ENCODE measurements at regions of chr6 and their contacts with region 1.

Region 1: DNA sequence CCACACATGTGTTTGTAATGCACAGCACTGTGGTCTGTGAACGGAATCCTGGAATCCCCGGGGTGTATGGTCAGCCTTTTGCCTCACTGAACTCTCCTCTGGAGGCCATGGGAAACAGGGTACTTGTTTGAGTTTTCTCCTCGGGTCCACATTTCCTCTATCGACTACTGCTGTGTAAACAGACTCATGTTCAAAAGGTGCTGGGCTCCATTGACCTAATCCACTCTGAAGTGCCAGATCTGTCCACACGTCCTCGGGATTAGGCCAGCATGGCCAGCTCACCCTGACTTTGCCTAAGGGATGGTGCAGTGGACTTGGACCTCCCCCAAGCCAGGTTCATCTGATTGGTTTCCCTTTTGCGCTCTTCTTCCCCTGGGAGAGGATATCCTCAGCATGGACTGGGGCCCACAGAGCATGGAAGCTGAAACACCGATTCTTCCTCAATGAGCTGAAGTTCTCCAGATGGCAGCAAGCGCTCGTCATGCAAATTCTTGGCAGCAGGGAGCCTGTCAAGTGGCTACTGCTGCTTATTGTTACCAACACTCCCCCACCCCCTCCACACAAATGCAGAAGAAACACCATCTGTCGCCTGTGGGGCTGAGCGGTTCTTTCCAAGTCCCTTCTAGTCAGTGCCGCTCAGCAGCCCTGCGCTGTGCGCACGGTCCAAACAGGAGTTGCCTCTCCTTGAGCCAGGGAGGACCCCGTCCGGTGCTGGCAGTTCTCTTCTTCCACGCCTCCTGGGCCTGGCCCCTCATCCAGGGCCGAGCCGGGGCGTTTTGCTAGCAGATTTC is 292.6 kb upstream of the MARCKS start:
- DNase-seq: peak; percentile 30
- ATAC-seq: peak; percentile 91
- H3K4me3 Mint-ChIP-seq: peak overlapping the region; percentile 64
- H3K27ac Mint-ChIP-seq: no peak overlapping the region
- H3K4me1 Mint-ChIP-seq: peaks cover 20% of the 10 kb centered on the region
- H3K27me3 Mint-ChIP-seq: no peaks in the 10 kb centered on the region
- CTCF ChIP-seq: no peak

Region 2: DNA sequence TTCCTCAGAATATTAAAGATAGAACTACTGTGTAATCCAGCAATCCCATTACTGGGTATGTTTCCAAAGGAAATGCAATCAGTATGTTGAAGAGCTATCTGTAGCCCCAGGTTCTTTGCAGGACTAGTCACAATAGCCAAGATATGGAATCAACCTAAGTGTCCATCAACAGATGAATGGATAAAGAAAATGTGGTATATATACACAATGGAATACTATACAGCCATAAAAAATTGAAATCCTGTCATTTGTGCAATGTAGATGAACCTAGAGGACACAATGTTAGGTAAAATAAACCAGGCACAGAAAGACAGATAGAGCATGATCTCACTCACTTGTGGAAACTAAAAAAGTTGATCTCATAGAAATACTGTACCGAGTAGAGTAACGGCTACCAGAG is 13.4 kb before region 1 on chr6:
- CTCF ChIA-PET with region 1: no interaction called
- POLR2A ChIA-PET with region 1: no interaction called
- intact Hi-C with region 1: no loop called
- DNase-seq: no peak
- ATAC-seq: no peak
- H3K4me3 Mint-ChIP-seq: no peak overlapping the region
- H3K27ac Mint-ChIP-seq: no peak overlapping the region
- H3K4me1 Mint-ChIP-seq: peaks cover 2% of the 10 kb centered on the region
- H3K27me3 Mint-ChIP-seq: no peaks in the 10 kb centered on the region
- CTCF ChIP-seq: no peak

Region 3: DNA sequence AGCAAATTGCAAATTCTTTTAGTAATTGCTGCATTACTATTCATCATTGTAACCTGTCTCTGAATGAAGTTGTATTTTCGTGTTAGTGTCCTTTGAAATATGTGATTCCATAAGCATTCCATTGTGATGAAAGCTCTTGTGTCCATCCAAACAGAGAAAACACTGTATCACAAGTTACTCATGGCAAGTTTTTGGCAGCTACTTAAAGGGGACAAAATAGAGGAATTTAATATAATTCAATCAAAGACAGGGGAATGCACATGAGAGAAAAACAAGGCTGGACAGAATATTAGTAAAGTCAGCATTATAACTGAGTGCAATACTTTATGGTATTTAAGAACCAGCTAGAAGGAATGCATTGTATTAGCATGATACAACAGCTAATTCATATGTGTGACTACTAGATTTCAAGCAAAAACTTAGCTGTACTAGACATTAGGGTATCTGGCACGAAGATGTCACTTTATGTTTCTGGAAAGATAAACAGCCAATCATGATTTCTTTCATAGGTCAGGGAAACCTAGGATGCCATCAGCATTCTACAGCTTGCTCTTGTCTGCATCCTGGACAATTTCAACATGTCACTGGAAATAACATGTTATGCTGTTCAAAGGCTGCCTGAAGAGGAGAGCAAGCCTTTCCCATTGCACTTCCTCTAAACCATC is 22.0 kb after region 1 on chr6:
- CTCF ChIA-PET with region 1: no interaction called
- POLR2A ChIA-PET with region 1: no interaction called
- intact Hi-C with region 1: loop called (anchors 2 kb)
- DNase-seq: no peak
- ATAC-seq: no peak
- H3K4me3 Mint-ChIP-seq: no peak overlapping the region
- H3K27ac Mint-ChIP-seq: no peak overlapping the region
- H3K4me1 Mint-ChIP-seq: no peaks in the 10 kb centered on the region
- H3K27me3 Mint-ChIP-seq: no peaks in the 10 kb centered on the region
- CTCF ChIP-seq: no peak

Measured in activated B cell treated with CpG ODN at 0.5 μM for 24 hours (primary cell).